ENCODE measurements at regions of chr5 and their contacts with region 1.

Region 1: DNA sequence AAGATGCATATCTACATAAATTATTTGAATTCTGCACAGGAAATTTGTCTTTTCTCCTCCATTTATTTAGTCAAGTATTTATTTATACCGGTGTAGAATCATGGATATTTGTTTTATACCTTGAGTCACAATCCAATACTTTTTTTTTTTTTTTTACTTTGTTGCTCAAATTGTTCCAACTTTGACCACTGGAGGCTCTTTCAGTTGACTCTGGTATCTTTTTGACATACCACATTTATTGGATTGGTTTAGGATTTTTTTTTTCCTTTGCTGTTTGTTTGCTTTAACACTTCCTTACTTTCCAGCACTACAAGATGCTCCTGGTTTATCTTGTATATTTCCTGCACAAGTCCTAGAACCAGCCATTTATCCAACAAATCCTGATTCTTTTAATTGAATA is 543.1 kb upstream of the RIOK2 start:
- DNase-seq: no peak
- ATAC-seq: no peak
- H3K4me3 ChIP-seq: no peak overlapping the region
- H3K27ac ChIP-seq: no peak overlapping the region
- H3K4me1 ChIP-seq: no peaks in the 10 kb centered on the region
- H3K27me3 ChIP-seq: no peaks in the 10 kb centered on the region

Region 2: DNA sequence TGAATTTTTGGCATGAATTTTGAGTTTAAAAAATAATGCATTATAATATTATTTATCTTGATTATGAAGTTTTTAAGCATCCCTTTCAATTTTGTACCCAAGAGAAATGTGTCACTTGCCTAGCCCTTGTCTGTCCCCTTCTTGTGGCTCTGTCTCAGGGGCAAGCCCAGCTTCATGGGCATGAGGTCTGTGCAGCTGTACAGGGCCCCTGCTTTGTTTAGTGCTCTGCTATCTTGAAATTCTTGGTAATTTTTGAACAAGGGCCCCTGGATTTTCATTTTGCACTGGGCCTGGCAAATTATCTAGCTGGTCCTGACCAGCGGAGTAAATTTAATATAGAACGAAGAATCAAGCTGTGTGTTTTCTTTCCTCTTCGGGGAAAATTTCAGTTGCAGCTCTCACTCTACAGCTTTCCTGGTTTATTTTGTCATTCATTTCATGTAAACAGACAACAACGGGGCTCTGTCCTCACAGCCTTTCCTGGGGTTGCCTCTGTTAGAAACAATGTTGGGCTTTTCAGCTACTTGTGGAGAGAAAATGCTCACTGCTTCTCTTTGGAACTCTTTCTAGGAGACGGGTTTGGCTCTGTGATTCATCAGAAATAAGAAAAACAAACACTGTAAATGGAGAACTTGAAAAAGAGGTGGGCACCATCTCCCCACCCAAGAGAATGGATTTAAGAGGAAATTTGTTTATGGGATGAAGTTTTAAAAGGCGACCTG is 624.8 kb before region 1 on chr5:
- intact Hi-C with region 1: loop called in 1 of 2 experiments (anchors 10 kb)
- DNase-seq: no peak
- ATAC-seq: no peak
- H3K4me3 ChIP-seq: no peak overlapping the region
- H3K27ac ChIP-seq: no peak overlapping the region
- H3K4me1 ChIP-seq: peaks cover 0 to 2% of the 10 kb centered on the region in 2 donors
- H3K27me3 ChIP-seq: no peaks in the 10 kb centered on the region